Activated CD8-positive, alpha-beta T cell treated with anti-CD3 and anti-CD28 coated beads for 36 hours (primary cell): ENCODE measurements at regions of chr17 and their contacts with region 1.

Region 1: GRCh38 chr17:40531051-40531991 is 29.9 kb upstream of the TNS4 start:
- DNase-seq: peak; percentile 94
- ATAC-seq: peak; percentile 68
- H3K4me3 Mint-ChIP-seq: peak overlapping the region; percentile 73
- H3K27ac Mint-ChIP-seq: peak overlapping the region; percentile 95
- H3K4me1 Mint-ChIP-seq: peaks cover 70% of the 10 kb centered on the region
- H3K27me3 Mint-ChIP-seq: no peaks in the 10 kb centered on the region
- CTCF ChIP-seq: no peak

Region 2: GRCh38 chr17:40355123-40355803 is 176.1 kb before region 1 on chr17:
- CTCF ChIA-PET with region 1: interaction called, 168 read pairs
- POLR2A ChIA-PET with region 1: interaction called, 5 read pairs
- intact Hi-C with region 1: loop called (anchors 5 kb)
- DNase-seq: peak; percentile 84
- ATAC-seq: peak; percentile 84
- H3K4me3 Mint-ChIP-seq: no peak overlapping the region
- H3K27ac Mint-ChIP-seq: no peak overlapping the region
- H3K4me1 Mint-ChIP-seq: peaks cover 19% of the 10 kb centered on the region
- H3K27me3 Mint-ChIP-seq: no peaks in the 10 kb centered on the region
- CTCF ChIP-seq: peak; percentile 95

Region 3: DNA sequence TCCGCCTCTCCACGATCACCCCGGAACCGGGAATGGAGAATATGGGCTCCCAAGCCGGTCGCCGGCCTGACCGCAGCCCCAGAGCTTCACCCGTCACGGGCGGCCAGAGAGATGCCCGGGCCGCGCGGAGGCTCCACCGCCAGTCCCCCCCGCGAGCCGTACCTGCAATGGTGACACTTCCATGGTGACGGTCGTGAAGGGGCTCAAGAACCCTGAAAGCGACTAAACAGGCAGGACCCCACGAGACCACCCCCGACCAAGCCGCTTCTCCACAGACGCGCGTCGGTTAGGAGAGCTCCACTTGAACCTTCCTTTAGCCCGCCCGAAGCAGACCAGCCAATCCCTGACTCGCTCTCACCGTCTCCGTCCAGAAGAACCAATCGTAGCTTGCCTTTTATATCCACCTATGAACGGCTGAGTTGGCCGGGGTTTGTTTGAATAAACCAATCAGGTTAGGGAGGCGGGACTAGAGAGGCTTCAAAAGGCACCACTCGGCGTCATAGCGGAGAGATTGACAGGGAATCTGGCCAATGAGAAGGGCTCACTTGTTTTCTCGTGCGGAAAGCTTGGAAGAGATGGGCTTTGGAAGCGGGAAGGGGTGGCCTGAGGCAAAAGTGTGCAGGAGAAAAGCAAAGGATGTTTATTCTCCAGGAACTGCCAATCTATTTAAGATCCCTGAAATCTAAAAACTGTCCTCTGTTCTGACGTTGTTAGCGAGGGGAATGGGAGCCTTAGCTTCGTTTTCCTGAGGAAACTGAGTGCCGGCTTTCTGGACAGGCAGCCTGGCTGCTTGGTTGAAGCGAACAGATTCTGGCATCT is 113.5 kb before region 1 on chr17 and contains the start of gene TOP2A:
- CTCF ChIA-PET with region 1: interaction called, 114 read pairs
- POLR2A ChIA-PET with region 1: interaction called, 24 read pairs
- intact Hi-C with region 1: loop called (anchors 5 kb)
- DNase-seq: peak; percentile 97
- ATAC-seq: peak; percentile 99
- H3K4me3 Mint-ChIP-seq: peak within 1 kb of the TSS; percentile 96
- H3K27ac Mint-ChIP-seq: peak within 1 kb of the TSS; percentile 93
- H3K4me1 Mint-ChIP-seq: peaks cover 20% of the 10 kb centered on the region
- H3K27me3 Mint-ChIP-seq: no peaks in the 10 kb centered on the region
- CTCF ChIP-seq: no peak
- total RNA-seq, gene TOP2A: 273 to 280 TPM

Region 4: GRCh38 chr17:40443583-40444327 is 87.6 kb before region 1 on chr17:
- CTCF ChIA-PET with region 1: interaction called, 97 read pairs
- POLR2A ChIA-PET with region 1: interaction called, 7 read pairs
- intact Hi-C with region 1: loop called (anchors 5 kb)
- DNase-seq: peak; percentile 76
- ATAC-seq: peak; percentile 77
- H3K4me3 Mint-ChIP-seq: peak overlapping the region; percentile 62
- H3K27ac Mint-ChIP-seq: peak overlapping the region; percentile 83
- H3K4me1 Mint-ChIP-seq: peaks cover 28% of the 10 kb centered on the region
- H3K27me3 Mint-ChIP-seq: peaks cover 5% of the 10 kb centered on the region
- CTCF ChIP-seq: peak; percentile 70

Region 5: DNA sequence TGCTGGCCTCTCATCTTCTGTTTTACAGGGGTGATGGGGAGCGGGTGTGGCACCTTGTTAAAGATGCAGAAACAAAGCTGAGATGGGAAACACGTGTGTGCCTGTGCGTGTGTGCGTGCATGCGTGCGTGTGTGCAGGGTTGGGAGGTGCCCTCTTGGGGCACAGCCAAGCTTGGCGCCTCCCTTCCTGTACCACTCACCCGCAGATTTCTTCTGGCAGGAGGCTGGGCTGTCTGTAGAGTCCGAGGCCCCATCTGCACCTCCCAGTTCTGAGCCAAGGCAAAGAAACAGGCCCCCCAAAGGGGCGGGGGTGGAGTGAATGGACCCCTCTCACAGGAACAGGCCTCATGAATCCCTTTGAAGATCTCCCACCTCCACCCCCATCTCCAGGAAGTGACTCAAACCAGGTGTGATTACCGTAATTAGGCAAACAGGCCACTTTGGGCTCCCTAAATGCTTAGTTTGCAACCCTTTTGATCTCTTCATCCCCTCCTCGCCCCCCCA is 50.8 kb before region 1 on chr17:
- CTCF ChIA-PET with region 1: interaction called, 158 read pairs
- POLR2A ChIA-PET with region 1: interaction called, 30 read pairs
- intact Hi-C with region 1: loop called (anchors 5 kb)
- DNase-seq: peak; percentile 98
- ATAC-seq: peak; percentile 91
- H3K4me3 Mint-ChIP-seq: peak overlapping the region; percentile 74
- H3K27ac Mint-ChIP-seq: peak overlapping the region; percentile 98
- H3K4me1 Mint-ChIP-seq: peaks cover 59% of the 10 kb centered on the region
- H3K27me3 Mint-ChIP-seq: no peaks in the 10 kb centered on the region
- CTCF ChIP-seq: no peak

Region 6: GRCh38 chr17:40551879-40552768 is 20.8 kb after region 1 on chr17:
- CTCF ChIA-PET with region 1: interaction called, 31 read pairs
- POLR2A ChIA-PET with region 1: interaction called, 548 read pairs
- intact Hi-C with region 1: no loop called
- DNase-seq: peak; percentile 58
- ATAC-seq: peak; percentile 12
- H3K4me3 Mint-ChIP-seq: peak overlapping the region; percentile 54
- H3K27ac Mint-ChIP-seq: peak overlapping the region; percentile 88
- H3K4me1 Mint-ChIP-seq: peaks cover 99% of the 10 kb centered on the region
- H3K27me3 Mint-ChIP-seq: no peaks in the 10 kb centered on the region
- CTCF ChIP-seq: no peak